ENCODE measurements at regions of chr12 and their contacts with region 1.

Region 1: DNA sequence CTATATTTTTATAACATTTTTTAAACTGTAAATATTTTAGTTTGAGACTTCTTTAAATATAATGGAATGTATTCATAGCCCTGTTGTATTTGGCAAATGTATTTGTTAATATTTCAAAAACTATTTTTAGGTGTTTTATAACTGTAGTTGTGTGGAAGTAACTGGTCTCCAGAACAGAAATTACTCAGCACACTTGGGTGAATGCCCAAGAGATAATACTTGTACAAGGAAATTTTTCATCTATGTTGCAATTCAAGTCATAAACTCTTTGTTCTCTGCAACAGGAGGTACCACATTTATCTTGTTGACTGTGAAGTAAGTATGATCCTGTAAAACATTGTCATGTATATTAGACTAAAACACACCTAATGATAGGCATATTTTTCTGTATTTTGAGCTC is 72.8 kb downstream of the SLCO1B3 start:
- ATAC-seq: no peak
- H3K4me3 ChIP-seq: no peak overlapping the region
- H3K27ac ChIP-seq: no peak overlapping the region
- H3K4me1 ChIP-seq: no peaks in the 10 kb centered on the region

Region 2: DNA sequence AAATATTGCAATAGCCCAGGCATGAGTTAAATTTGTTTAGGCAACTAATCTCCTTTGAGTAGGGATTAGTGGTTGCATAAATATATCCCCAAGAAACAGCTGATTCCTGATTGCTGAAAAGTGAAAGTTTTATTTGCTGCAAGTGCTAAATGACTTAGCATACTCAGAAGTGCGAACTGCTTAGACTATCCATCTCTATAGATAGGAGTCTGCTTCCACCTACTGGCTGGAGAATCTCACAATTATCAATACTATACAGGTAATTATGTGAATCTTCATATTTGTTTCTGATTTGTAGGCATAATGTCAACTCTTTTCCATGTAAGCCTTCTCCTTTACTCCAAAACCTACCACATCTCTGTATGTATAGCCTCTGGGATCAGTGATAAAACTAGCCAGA is 84.7 kb before region 1 on chr12:
- in situ Hi-C with region 1: loop called in 1 of 9 experiments (anchors 25 kb)
- ATAC-seq: peak in 4 of 8 experiments; percentile 48 to 84 (median 57)
- H3K4me3 ChIP-seq: no peak overlapping the region
- H3K27ac ChIP-seq: no peak overlapping the region
- H3K4me1 ChIP-seq: no peaks in the 10 kb centered on the region

Measured in motor neuron (in vitro differentiated cells).